Gastrocnemius medialis (tissue), 4 donors: ENCODE measurements at regions of chr14 and their contacts with region 1.

Region 1: DNA sequence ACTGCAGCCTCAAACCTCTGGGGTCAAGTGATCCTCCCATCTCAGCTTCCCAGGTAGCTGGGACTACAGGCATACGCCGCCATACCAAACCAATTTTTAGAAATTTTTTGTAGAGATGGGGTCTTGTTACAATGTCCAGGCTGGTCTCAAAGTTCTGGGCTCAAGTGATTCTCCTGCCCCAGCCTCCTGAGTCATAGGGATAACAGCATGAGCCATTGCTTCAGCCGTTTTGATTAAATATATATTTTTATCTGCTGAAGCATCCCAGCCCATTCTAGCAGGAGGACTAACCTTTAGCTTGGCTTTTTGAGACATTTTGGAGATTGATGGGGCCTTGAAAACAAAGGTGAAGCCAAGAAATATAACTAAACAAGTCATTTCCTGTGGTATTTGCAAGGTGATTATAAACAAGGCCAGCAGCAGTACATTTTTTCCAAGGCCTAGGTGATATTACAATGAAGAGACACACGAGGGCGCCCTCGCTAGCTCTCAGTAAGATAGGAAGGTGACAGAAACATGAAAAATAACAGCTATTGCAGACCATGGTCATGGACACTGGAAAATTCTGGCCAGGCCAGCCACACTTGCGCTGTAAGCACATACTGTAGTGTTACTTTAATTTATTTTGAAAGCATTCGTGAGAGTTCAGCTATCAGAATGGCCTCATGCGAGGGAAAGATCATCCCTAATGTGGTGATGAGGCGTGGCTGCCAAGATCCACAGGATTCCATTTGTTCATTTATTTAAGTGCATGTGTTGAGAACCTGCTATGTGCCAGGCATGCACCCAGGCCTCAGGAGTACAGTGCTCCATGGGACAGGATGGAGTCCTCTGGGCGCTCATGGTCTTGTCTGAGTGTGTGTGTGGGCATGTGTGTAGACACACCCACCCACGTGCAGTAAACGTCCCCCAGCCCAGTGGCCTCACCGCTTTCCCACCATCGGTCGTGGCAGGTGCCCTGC is 63.5 kb downstream of the DGLUCY start:
- DNase-seq: no peak
- ATAC-seq: no peak
- H3K4me3 ChIP-seq: no peak overlapping the region
- H3K27ac ChIP-seq: peak overlapping the region in 3 of 4 donors; percentile 5 to 40 (median 27)
- H3K4me1 ChIP-seq: peaks cover 4 to 8% of the 10 kb centered on the region in 2 donors
- H3K27me3 ChIP-seq: no peaks in the 10 kb centered on the region
- CTCF ChIP-seq: peak; percentile 23 to 72 (median 60)
- POLR2A ChIP-seq: no peak

Region 2: DNA sequence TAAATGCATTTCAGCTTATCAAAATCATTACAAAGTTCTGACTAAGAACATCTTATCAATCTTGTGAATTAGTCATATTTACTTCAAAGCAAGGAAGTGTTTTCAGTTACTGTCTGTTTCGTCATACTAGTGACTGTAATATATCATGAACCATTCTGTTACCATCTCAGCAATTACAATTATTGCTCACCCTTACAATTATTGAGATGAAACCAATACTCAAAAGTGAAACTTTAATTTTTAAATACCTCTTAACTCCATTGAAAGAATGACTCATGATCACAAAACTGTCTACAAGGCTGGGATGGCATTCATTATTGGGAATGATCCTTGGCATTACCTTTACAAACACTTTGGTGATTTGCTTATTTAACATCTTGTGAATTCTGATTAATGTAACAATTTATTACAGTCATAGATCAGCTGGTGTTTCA is 207.2 kb before region 1 on chr14:
- in situ Hi-C with region 1: no loop called
- intact Hi-C with region 1: no loop called
- DNase-seq: no peak
- ATAC-seq: no peak
- H3K4me3 ChIP-seq: no peak overlapping the region
- H3K27ac ChIP-seq: no peak overlapping the region
- H3K4me1 ChIP-seq: no peaks in the 10 kb centered on the region
- H3K27me3 ChIP-seq: no peaks in the 10 kb centered on the region
- CTCF ChIP-seq: no peak
- POLR2A ChIP-seq: no peak

Region 3: GRCh38 chr14:91138511-91139359 is 38.6 kb before region 1 on chr14:
- in situ Hi-C with region 1: no loop called
- intact Hi-C with region 1: loop called (anchors 1 kb)
- DNase-seq: peak in 1 of 2 donors; percentile 55
- ATAC-seq: peak; percentile 67 to 81
- H3K4me3 ChIP-seq: no peak overlapping the region
- H3K27ac ChIP-seq: peak overlapping the region; percentile 42 to 63 (median 50)
- H3K4me1 ChIP-seq: peaks cover 15 to 24% of the 10 kb centered on the region in 2 donors
- H3K27me3 ChIP-seq: no peaks in the 10 kb centered on the region
- CTCF ChIP-seq: peak; percentile 37 to 79 (median 65)
- POLR2A ChIP-seq: no peak

Region 4: DNA sequence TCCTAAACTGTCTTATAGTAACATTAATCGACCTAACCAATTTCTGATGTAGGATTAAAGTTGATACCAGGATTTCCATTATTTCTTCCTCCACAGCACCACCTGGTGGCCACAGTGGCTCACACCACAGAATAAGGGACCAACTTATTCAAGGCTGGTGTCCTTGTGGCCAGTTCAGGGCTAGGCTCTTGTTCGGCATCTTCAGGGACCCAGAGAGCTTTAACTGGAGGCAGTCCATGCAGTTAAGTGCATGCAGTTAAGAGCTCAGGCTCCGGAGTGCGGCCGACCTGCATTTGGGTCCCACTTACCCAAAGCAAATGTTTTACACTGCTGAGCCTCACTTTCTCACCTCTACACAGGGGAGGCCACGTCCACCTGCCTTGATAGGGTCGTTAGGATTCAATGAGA is 109.2 kb after region 1 on chr14:
- in situ Hi-C with region 1: loop called (anchors 5 to 25 kb)
- intact Hi-C with region 1: loop called (anchors 1 kb)
- DNase-seq: peak in 1 of 2 donors; percentile 53
- ATAC-seq: peak; percentile 62
- H3K4me3 ChIP-seq: no peak overlapping the region
- H3K27ac ChIP-seq: no peak overlapping the region
- H3K4me1 ChIP-seq: no peaks in the 10 kb centered on the region
- H3K27me3 ChIP-seq: no peaks in the 10 kb centered on the region
- CTCF ChIP-seq: peak; percentile 75 to 84 (median 80)
- POLR2A ChIP-seq: no peak